ENCODE measurements at regions of chr6 and their contacts with region 1.

Region 1: DNA sequence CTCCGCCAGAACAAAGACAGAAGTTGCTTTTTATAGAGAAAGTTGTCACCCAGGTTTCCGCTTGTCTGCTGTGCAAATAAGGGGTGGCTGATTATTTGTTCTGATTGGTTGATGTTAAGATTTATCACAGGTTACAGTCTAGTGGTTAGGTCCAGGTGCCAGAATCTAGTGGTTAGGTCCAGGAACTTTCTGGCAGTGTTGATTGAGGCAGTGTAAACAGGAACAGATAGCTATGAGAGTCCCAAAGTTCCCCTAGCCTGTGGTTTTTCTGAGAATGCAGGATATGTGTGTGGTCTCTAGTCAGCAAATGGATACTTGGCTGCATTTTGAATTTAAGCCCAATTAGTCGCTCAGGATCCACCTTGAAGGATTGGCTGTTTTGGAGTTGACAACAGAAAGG is 148.0 kb downstream of the TMEM200A start:
- DNase-seq: peak; percentile 76
- H3K4me3 Mint-ChIP-seq: no peak overlapping the region
- H3K27ac Mint-ChIP-seq: peak overlapping the region; percentile 88
- H3K4me1 Mint-ChIP-seq: peaks cover 57% of the 10 kb centered on the region
- H3K27me3 Mint-ChIP-seq: no peaks in the 10 kb centered on the region

Region 2: GRCh38 chr6:130365166-130366106 is 148.3 kb before region 1 on chr6 and contains the start of gene TMEM200A:
- intact Hi-C with region 1: loop called (anchors 5 kb)
- DNase-seq: peak; percentile 20
- H3K4me3 Mint-ChIP-seq: peak within 1 kb of the TSS; percentile 75
- H3K27ac Mint-ChIP-seq: peak within 1 kb of the TSS; percentile 12
- H3K4me1 Mint-ChIP-seq: peaks cover 20% of the 10 kb centered on the region
- H3K27me3 Mint-ChIP-seq: peaks cover 49% of the 10 kb centered on the region
- total RNA-seq, gene TMEM200A: 1.1 and 1.3 TPM in 2 replicates

Region 3: GRCh38 chr6:130575971-130576370 is 62.2 kb after region 1 on chr6:
- intact Hi-C with region 1: loop called (anchors 2 kb)
- DNase-seq: peak; percentile 73
- H3K4me3 Mint-ChIP-seq: peak overlapping the region; percentile 44
- H3K27ac Mint-ChIP-seq: peak overlapping the region; percentile 61
- H3K4me1 Mint-ChIP-seq: peaks cover 40% of the 10 kb centered on the region
- H3K27me3 Mint-ChIP-seq: no peaks in the 10 kb centered on the region

Region 4: GRCh38 chr6:130602151-130602770 is 88.5 kb after region 1 on chr6:
- intact Hi-C with region 1: loop called (anchors 1 kb)
- DNase-seq: no peak
- H3K4me3 Mint-ChIP-seq: no peak overlapping the region
- H3K27ac Mint-ChIP-seq: peak overlapping the region; percentile 35
- H3K4me1 Mint-ChIP-seq: peaks cover 33% of the 10 kb centered on the region
- H3K27me3 Mint-ChIP-seq: no peaks in the 10 kb centered on the region

Region 5: GRCh38 chr6:130625825-130626527 is 112.2 kb after region 1 on chr6:
- intact Hi-C with region 1: loop called (anchors 1 kb)
- DNase-seq: no peak
- H3K4me3 Mint-ChIP-seq: peak overlapping the region; percentile 30
- H3K27ac Mint-ChIP-seq: peak overlapping the region; percentile 90
- H3K4me1 Mint-ChIP-seq: peaks cover 61% of the 10 kb centered on the region
- H3K27me3 Mint-ChIP-seq: no peaks in the 10 kb centered on the region

Region 6: DNA sequence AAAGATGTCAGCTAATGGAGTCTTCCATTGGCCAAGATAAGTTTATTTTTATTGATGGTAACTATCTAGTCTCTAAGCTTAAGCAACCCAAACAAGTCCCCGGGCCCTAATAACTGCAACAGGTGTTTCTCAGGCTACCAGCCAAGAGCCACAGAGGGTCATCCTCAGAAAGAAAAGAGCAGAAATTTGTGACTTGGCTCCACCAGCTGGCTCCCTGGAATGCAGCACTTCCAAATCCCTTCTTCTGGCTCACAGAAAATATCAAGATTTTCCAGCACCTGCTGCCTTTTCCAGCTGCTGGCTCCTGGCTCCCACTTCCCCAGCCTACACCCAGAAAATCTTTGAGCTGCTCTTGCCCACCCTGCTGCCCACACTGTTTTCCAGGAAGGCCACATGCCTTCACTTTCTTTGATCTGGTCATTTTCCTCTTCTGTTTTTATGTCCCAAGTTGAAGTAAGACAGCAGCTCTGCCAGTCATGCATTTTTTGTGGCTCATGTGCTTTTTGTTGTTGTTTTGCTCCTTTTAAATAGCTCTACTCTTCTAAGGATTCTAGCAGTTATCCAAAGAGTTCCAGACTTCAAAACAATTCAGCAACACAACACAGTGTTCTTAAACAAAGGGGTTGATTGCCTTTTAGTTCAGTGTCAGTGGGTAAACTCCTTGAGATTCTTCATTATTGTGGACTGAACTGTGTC is 162.5 kb after region 1 on chr6:
- intact Hi-C with region 1: loop called (anchors 5 kb)
- DNase-seq: no peak
- H3K4me3 Mint-ChIP-seq: no peak overlapping the region
- H3K27ac Mint-ChIP-seq: peak overlapping the region; percentile 1
- H3K4me1 Mint-ChIP-seq: peaks cover 20% of the 10 kb centered on the region
- H3K27me3 Mint-ChIP-seq: no peaks in the 10 kb centered on the region

Region 7: DNA sequence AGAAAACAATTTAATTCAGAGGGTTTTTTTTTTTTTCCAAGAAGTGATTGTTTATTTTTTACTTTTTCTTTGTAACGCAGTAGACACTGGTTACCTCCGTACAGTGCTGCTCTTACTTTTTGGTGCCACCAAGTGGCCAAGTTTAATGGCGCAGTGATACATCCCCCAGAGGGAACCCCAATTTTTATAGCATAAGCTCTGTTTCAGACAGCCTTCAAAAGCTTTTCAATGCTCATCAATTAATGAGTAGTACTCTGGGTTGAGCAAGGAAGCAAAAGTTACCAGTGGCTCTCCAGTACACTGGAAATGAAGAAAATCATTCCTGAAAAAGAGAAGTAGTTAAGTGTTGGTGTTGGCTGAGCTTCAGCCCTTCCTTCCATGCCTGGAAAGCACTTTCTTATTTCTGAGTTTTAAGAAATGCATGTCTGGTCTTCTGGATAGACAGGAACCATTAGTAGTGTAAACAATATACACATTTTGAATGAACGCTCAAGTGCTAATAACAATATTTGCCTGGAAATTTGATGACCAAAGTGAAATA is 184.3 kb after region 1 on chr6:
- intact Hi-C with region 1: loop called (anchors 5 kb)
- DNase-seq: peak; percentile 51
- H3K4me3 Mint-ChIP-seq: no peak overlapping the region
- H3K27ac Mint-ChIP-seq: peak overlapping the region; percentile 29
- H3K4me1 Mint-ChIP-seq: peaks cover 18% of the 10 kb centered on the region
- H3K27me3 Mint-ChIP-seq: no peaks in the 10 kb centered on the region